Vagina (tissue), 2 donors: ENCODE measurements at regions of chrX and their contacts with region 1.

Region 1: GRCh38 chrX:155056877-155057792 is 13.8 kb downstream of the CMC4 start:
- DNase-seq: no peak
- H3K4me3 ChIP-seq: no peak overlapping the region
- H3K27ac ChIP-seq: peak overlapping the region; percentile 20
- H3K4me1 ChIP-seq: no peaks in the 10 kb centered on the region
- H3K27me3 ChIP-seq: no peaks in the 10 kb centered on the region
- CTCF ChIP-seq: peak; percentile 26 to 81 (median 58)
- POLR2A ChIP-seq: no peak

Region 2: DNA sequence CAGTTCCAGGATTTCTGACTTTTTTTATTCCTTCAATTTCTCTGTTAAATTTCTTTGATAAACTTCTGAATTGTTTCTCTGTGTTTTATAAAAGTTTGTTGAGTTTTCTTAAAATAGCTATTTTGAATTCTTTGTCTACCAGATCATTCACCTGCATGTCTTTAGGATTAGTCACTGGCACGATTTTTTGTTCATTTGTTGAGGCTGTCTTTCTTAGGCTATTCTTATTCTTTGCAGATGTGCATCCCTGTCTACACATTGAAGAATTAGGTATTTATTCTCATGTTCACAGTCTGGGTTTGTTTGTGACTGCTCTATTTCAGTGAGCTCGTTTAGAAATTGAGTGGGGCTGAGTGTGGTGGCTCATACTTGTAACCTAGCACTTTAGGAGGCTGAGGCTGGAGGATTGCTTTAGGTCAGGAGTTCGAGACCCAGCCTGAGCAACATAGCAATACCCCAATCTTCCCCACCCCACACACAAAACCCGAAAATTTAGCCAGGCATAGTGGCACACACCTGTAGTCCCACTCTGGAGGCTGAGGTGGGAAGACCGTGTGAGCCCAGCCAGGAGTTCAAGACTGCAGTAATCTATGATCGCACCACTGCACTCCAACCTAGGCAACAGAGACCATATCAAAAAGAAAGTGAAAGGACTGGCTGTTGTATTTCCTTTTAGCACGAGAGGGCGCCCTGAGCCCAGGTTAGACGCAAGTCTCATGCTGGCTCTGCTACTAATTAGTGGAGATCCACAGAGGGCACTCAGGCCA is 76.6 kb before region 1 on chrX:
- intact Hi-C with region 1: loop called (anchors 10 kb)
- DNase-seq: no peak
- H3K4me3 ChIP-seq: peak overlapping the region; percentile 26 to 39
- H3K27ac ChIP-seq: no peak overlapping the region
- H3K4me1 ChIP-seq: no peaks in the 10 kb centered on the region
- H3K27me3 ChIP-seq: no peaks in the 10 kb centered on the region
- CTCF ChIP-seq: peak in 2 of 3 experiments; percentile 54 to 75
- POLR2A ChIP-seq: no peak

Region 3: GRCh38 chrX:155949098-155949497 is 892.0 kb after region 1 on chrX:
- intact Hi-C with region 1: no loop called
- DNase-seq: no peak
- H3K4me3 ChIP-seq: no peak overlapping the region
- H3K27ac ChIP-seq: no peak overlapping the region
- H3K4me1 ChIP-seq: no peaks in the 10 kb centered on the region
- H3K27me3 ChIP-seq: no peaks in the 10 kb centered on the region
- CTCF ChIP-seq: no peak
- POLR2A ChIP-seq: no peak